ENCODE measurements at regions of chr1 and their contacts with region 1.

Region 1: GRCh38 chr1:174262349-174263241 is 103.3 kb downstream of the RABGAP1L start:
- DNase-seq: peak; percentile 66
- H3K4me3 ChIP-seq: no peak overlapping the region
- H3K27ac ChIP-seq: no peak overlapping the region
- H3K4me1 ChIP-seq: no peaks in the 10 kb centered on the region
- H3K27me3 ChIP-seq: no peaks in the 10 kb centered on the region

Region 2: DNA sequence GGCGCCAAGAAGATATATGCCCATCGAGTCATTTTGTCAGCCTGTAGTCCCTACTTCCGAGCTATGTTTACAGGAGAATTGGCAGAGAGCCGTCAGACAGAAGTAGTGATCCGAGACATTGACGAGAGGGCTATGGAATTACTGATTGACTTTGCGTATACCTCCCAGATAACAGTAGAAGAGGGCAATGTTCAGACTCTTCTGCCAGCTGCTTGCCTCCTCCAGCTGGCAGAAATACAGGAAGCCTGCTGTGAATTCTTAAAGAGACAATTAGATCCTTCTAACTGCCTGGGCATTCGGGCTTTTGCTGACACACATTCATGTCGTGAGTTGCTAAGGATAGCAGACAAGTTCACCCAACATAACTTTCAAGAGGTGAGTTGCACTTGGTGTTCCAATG is 528.7 kb before region 1 on chr1:
- in situ Hi-C with region 1: no loop called
- DNase-seq: no peak
- H3K4me3 ChIP-seq: no peak overlapping the region
- H3K27ac ChIP-seq: no peak overlapping the region
- H3K4me1 ChIP-seq: no peaks in the 10 kb centered on the region
- H3K27me3 ChIP-seq: no peaks in the 10 kb centered on the region

Region 3: GRCh38 chr1:174724219-174724618 is 461.6 kb after region 1 on chr1:
- in situ Hi-C with region 1: loop called (anchors 5 kb)
- DNase-seq: no peak
- H3K4me3 ChIP-seq: no peak overlapping the region
- H3K27ac ChIP-seq: no peak overlapping the region
- H3K4me1 ChIP-seq: peaks cover 9% of the 10 kb centered on the region; the same call in 1 of the 2 replicates
- H3K27me3 ChIP-seq: no peaks in the 10 kb centered on the region

Region 4: DNA sequence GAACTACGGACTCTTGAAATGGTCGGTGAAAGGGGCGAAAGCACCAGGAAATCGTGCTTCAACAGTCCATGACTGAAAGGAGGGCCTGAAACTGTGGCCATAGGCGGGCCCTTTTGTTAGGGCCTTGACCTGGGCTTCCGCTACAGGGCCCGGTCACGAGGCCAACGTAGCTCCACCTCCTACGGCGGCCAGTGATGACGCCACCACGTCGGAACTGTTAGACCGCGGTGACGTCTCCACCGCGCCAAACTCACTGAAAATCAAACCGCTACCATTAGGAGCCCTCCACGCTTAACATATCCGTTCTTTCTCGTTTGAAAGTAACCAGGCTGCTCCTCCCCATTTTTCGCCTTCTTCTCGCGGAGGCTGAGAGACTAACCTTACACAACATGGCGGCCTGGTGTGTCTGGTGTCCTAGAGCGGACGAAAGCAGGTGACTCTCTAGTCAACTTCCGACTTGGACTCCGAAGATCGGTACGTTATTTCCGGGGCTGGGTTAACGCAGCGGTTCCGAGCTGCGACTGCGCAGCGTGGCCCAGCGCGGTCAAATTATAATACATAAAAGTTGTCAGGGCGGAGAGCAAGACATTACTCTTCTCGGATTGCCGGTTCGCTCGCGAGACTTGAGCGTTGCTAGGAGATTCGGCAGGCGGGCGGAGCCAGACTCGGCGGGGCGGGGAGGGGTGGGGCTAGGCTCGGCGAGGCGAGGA is 736.8 kb after region 1 on chr1:
- in situ Hi-C with region 1: loop called (anchors 25 kb)
- DNase-seq: peak; percentile 100
- H3K4me3 ChIP-seq: peak overlapping the region; percentile 84
- H3K27ac ChIP-seq: peak overlapping the region; percentile 98
- H3K4me1 ChIP-seq: peaks cover 47% of the 10 kb centered on the region
- H3K27me3 ChIP-seq: no peaks in the 10 kb centered on the region

Measured in GM23248 (cell line).